Activated CD4-positive, alpha-beta T cell treated with anti-CD3 and anti-CD28 coated beads for 36 hours (primary cell): ENCODE measurements at regions of chr17 and their contacts with region 1.

Region 1: DNA sequence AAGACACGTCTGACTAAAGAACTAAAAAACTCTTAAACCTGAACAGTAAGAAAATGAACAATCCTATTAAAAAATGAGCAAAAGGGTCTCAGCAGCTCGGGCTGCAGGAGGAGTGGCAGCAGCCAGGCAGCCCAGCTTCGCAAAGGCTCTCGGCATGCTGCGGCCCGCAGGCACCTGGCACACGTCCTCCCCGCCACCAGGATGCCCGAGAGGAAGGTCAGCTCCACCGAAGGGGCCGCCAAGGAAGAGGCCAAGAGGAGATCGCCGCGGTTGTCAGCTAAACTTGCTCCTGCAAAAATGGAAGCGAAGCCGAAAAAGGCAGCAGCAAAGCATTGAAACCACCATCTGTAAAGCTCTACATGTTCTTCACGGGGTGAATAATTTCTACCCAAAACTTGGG is 173.5 kb downstream of the BCAS3 start:
- DNase-seq: no peak
- ATAC-seq: no peak
- H3K4me3 Mint-ChIP-seq: no peak overlapping the region
- H3K27ac Mint-ChIP-seq: no peak overlapping the region
- H3K4me1 Mint-ChIP-seq: no peaks in the 10 kb centered on the region
- H3K27me3 Mint-ChIP-seq: no peaks in the 10 kb centered on the region

Region 2: GRCh38 chr17:60888812-60889709 is 37.9 kb after region 1 on chr17:
- CTCF ChIA-PET with region 1: no interaction called
- POLR2A ChIA-PET with region 1: no interaction called
- intact Hi-C with region 1: no loop called
- DNase-seq: no peak
- ATAC-seq: no peak
- H3K4me3 Mint-ChIP-seq: no peak overlapping the region
- H3K27ac Mint-ChIP-seq: no peak overlapping the region
- H3K4me1 Mint-ChIP-seq: no peaks in the 10 kb centered on the region
- H3K27me3 Mint-ChIP-seq: no peaks in the 10 kb centered on the region

Region 3: GRCh38 chr17:61271677-61272076 is 420.5 kb after region 1 on chr17:
- CTCF ChIA-PET with region 1: no interaction called
- POLR2A ChIA-PET with region 1: no interaction called
- intact Hi-C with region 1: loop called in 1 of 2 experiments (anchors 2 kb)
- DNase-seq: no peak
- ATAC-seq: no peak
- H3K4me3 Mint-ChIP-seq: no peak overlapping the region
- H3K27ac Mint-ChIP-seq: no peak overlapping the region
- H3K4me1 Mint-ChIP-seq: no peaks in the 10 kb centered on the region
- H3K27me3 Mint-ChIP-seq: no peaks in the 10 kb centered on the region